MCF 10A (cell line): ENCODE measurements at regions of chr5 and their contacts with region 1.

Region 1: DNA sequence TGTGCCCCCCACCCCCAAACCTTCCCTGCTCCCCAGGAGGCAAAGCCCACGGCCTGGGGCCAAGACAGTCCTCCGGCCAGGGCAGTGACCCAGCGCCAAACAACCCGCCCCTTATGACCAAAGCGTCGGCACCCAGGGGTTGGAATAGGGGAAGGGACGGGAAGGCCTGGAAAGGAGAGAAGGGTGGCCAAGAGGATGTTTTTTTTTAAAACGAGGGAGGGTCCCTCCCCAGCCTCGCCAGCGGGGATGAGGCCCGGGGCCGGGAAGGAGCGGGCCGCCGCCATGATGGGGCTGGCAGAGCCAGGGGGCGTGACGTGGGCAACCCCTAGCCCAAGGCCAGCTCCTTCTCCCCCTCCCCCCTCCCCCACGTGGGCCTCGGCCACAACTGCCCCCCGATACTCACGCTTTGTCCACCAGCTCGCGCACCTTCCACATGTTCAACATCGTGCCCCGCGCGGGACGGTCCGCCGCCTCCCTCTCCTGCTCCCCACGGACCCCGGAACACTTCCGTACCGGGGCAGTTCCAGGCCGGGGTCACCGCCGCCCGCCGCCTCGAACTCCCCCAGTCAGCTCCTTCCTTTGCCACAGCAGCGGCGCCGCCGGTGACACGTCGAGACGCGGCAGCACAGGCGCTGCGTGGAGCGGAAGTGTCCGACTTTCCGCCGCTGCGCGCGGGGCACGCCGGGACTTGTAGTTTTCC is at the start of gene CLINT1:
- DNase-seq: peak; percentile 92
- H3K4me3 Mint-ChIP-seq: peak within 1 kb of the TSS; percentile 96
- H3K27ac Mint-ChIP-seq: peak within 1 kb of the TSS; percentile 99
- H3K4me1 Mint-ChIP-seq: peaks cover 22% of the 10 kb centered on the region
- H3K27me3 Mint-ChIP-seq: no peaks in the 10 kb centered on the region
- CTCF ChIP-seq: no peak
- total RNA-seq, gene CLINT1: 170 and 176 TPM in 2 replicates

Region 2: DNA sequence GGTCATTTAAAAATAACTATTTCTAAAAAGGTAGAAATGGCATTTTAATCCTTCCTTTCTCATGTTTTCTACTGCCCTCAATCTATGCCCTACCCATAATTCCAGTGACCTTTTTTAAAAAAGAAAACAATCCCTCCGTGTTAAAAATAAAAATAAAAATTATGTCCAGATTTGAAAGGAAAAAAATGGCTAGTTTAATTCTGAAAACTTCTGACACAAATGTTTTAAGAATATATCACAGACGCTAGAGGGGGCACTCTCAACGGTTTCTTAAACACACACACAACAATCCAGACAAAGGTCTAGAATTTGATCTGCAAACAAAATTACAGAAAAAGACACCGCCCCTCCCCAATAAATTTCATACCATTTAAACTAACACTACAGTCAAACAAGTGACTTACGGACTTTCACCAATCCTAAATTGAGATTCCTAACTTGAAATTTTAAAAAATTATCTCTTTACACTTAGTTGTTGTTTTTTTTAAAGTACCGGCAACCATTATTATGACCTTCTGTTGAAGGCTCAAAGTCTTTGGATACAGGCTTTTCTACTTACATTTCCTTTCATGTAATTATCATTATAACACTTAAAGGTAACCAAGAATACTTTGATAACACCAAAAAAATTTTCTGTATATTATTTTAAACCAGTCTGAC is 38.0 kb before region 1 on chr5:
- CTCF ChIA-PET with region 1: interaction called, 17 read pairs
- POLR2A ChIA-PET with region 1: interaction called, 3 read pairs
- intact Hi-C with region 1: loop called (anchors 2 kb)
- DNase-seq: peak; percentile 68
- H3K4me3 Mint-ChIP-seq: no peak overlapping the region
- H3K27ac Mint-ChIP-seq: peak overlapping the region; percentile 61
- H3K4me1 Mint-ChIP-seq: peaks cover 21% of the 10 kb centered on the region
- H3K27me3 Mint-ChIP-seq: no peaks in the 10 kb centered on the region
- CTCF ChIP-seq: peak; percentile 68

Region 3: GRCh38 chr5:157835041-157835440 is 23.6 kb before region 1 on chr5:
- CTCF ChIA-PET with region 1: interaction called, 34 read pairs
- POLR2A ChIA-PET with region 1: interaction called, 4 read pairs
- intact Hi-C with region 1: no loop called
- DNase-seq: no peak
- H3K4me3 Mint-ChIP-seq: no peak overlapping the region
- H3K27ac Mint-ChIP-seq: no peak overlapping the region
- H3K4me1 Mint-ChIP-seq: peaks cover 6% of the 10 kb centered on the region
- H3K27me3 Mint-ChIP-seq: no peaks in the 10 kb centered on the region
- CTCF ChIP-seq: no peak

Region 4: DNA sequence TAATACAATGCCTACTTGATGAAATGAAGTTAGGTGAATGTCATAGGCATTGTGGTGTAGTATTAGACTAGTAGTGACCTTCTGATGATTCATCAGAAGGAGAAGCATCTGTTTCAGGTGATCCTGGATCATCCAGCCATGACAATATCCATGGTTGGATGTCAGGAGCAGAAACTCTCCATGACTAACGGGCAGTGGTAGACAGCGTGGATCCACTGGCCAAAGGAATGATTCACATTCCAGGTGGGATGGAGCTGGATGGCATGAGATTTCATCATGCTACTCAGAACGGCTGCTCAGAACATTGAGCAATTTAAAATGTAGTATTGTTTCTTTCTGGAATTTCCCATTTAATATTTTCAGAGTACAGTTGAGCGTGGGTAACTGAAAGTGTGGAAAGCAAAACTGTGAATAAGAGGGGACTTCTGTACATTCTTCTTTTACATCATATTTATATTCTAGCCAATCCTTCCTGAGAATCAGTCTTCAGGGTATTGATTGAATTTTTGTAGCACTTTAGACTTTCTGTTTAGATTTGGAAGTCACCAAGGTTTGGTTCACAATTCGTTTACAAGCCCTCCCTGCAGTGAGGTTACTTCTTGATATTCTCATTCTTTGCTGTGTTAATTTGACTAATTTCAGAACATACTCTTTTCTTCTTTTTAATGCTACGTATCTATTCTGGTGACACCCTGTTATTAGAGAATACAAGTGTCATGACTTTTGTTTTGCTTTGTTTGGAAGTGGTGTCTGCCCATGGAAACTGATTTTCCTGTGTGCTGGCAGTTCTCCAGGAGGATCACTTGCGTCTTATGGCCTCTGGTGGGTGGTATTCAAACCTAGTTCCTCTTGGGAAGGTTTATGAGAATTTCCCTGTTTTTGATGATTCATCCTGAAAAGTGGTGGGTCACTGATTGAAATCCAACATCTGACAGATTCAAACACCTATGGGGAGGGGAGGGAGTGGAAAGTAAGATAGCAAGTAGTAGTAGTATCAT is 12.5 kb after region 1 on chr5:
- CTCF ChIA-PET with region 1: interaction called, 6 read pairs
- POLR2A ChIA-PET with region 1: interaction called, 12 read pairs
- intact Hi-C with region 1: loop called (anchors 1 kb)
- DNase-seq: peak; percentile 98
- H3K4me3 Mint-ChIP-seq: peak overlapping the region; percentile 65
- H3K27ac Mint-ChIP-seq: peak overlapping the region; percentile 98
- H3K4me1 Mint-ChIP-seq: peaks cover 18% of the 10 kb centered on the region
- H3K27me3 Mint-ChIP-seq: no peaks in the 10 kb centered on the region
- CTCF ChIP-seq: no peak

Region 5: GRCh38 chr5:157917899-157918809 is 59.5 kb after region 1 on chr5:
- CTCF ChIA-PET with region 1: interaction called, 37 read pairs
- POLR2A ChIA-PET with region 1: interaction called, 4 read pairs
- intact Hi-C with region 1: loop called (anchors 1 kb)
- DNase-seq: peak; percentile 90
- H3K4me3 Mint-ChIP-seq: no peak overlapping the region
- H3K27ac Mint-ChIP-seq: peak overlapping the region; percentile 38
- H3K4me1 Mint-ChIP-seq: peaks cover 32% of the 10 kb centered on the region
- H3K27me3 Mint-ChIP-seq: no peaks in the 10 kb centered on the region
- CTCF ChIP-seq: peak; percentile 82